GM13977 (cell line): ENCODE measurements at regions of chr6 and their contacts with region 1.

Region 1: DNA sequence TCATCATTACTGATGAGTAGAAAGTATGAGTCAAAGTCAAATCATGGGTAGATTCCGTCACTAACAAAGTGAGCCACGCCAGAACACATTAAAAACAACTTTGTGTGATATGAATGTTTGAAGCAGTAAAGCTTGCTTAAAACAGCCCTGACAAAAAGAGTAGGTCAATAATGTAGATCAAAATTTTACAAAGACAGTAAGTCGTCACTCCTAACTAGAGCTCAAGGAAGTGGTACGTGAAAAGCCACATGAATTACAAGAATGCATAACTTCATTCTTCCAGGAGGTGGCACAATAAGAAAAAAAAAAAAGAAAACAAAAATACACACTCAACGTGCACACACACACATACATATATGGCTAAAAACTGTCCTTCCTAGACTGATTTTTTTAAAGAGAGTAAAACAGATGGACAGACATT is 69.9 kb downstream of the HACE1 start:
- DNase-seq: peak; percentile 9
- CTCF ChIP-seq: peak; percentile 36

Region 2: GRCh38 chr6:105087571-105088211 is 297.9 kb after region 1 on chr6:
- in situ Hi-C with region 1: loop called (anchors 25 kb)
- DNase-seq: peak; percentile 56
- CTCF ChIP-seq: peak; percentile 75